Endothelial cell of umbilical vein (primary cell): ENCODE measurements at regions of chr15 and their contacts with region 1.

Region 1: GRCh38 chr15:59528965-59529402 is 82.6 kb upstream of the GCNT3 start:
- DNase-seq: peak; percentile 84
- H3K4me3 ChIP-seq: no peak overlapping the region
- H3K27ac ChIP-seq: no peak overlapping the region
- H3K4me1 ChIP-seq: no peaks in the 10 kb centered on the region
- H3K27me3 ChIP-seq: no peaks in the 10 kb centered on the region
- CTCF ChIP-seq: peak; percentile 78 to 84
- POLR2A ChIP-seq: no peak

Region 2: GRCh38 chr15:58212909-58213526 is 1316.0 kb before region 1 on chr15:
- CTCF ChIA-PET with region 1: interaction called, 27 read pairs
- POLR2A ChIA-PET with region 1: no interaction called
- dilution Hi-C with region 1: no loop called
- intact Hi-C with region 1: no loop called
- DNase-seq: peak; percentile 56
- H3K4me3 ChIP-seq: no peak overlapping the region
- H3K27ac ChIP-seq: no peak overlapping the region
- H3K4me1 ChIP-seq: peaks cover 5% of the 10 kb centered on the region
- H3K27me3 ChIP-seq: no peaks in the 10 kb centered on the region
- CTCF ChIP-seq: peak; percentile 35 to 59
- POLR2A ChIP-seq: no peak

Region 3: DNA sequence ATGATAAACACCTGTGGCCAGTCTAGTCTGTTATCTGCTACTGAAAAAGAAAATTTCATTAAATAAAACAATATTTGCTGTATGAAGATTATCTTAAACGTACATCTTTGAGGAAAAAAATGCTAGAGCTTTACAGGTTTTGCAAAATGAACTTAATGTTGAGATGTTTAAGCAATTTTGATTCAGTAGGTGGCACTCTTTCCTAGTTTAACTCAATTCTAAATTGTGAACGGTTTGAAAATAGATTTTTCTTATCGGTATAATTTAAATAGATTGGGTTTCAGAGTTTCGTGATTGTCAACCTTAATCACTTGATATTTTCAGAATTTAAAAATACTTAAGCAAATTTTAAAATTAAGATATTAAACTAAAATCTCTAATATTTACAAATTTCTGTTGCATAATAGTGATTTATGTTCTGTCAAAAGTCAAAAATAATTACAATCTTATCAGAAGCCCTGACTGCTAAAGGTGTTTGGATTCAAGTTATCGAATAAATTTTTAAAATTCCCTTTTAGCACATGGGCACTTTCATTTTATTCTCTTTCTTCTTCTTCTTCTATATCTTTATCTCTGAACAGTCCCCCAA is 548.5 kb before region 1 on chr15:
- CTCF ChIA-PET with region 1: interaction called, 15 read pairs
- POLR2A ChIA-PET with region 1: no interaction called
- dilution Hi-C with region 1: no loop called
- intact Hi-C with region 1: no loop called
- DNase-seq: peak; percentile 59
- H3K4me3 ChIP-seq: no peak overlapping the region
- H3K27ac ChIP-seq: no peak overlapping the region
- H3K4me1 ChIP-seq: peaks cover 10% of the 10 kb centered on the region
- H3K27me3 ChIP-seq: peaks cover 4 to 7% of the 10 kb centered on the region in 2 experiments
- CTCF ChIP-seq: peak; percentile 19 to 21
- POLR2A ChIP-seq: no peak

Region 4: DNA sequence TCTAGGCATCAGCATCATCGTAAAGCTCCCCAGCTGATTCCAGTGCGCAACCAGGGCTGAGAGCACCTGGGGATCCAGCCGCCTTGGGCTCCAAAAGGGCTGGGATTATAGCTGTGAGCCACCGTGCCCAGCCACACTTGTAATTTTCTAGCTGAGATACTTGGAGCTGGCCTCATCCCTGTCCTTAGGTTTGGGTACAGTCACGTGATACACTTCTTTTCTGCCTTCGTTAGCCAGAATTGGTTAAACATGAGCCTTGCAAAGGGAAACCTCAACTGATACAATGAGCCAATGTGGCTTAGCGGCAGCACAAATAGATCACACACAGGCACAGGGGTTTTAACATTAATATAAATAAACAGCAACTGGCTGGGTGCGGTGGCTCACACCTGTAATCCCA is 12.8 kb after region 1 on chr15:
- CTCF ChIA-PET with region 1: interaction called, 12 read pairs
- POLR2A ChIA-PET with region 1: no interaction called
- dilution Hi-C with region 1: no loop called
- intact Hi-C with region 1: no loop called
- DNase-seq: no peak
- H3K4me3 ChIP-seq: no peak overlapping the region
- H3K27ac ChIP-seq: no peak overlapping the region
- H3K4me1 ChIP-seq: no peaks in the 10 kb centered on the region
- H3K27me3 ChIP-seq: peaks cover 0 to 3% of the 10 kb centered on the region in 2 experiments
- CTCF ChIP-seq: no peak
- POLR2A ChIP-seq: no peak

Region 5: GRCh38 chr15:59622289-59622688 is 93.3 kb after region 1 on chr15:
- CTCF ChIA-PET with region 1: interaction called, 31 read pairs
- POLR2A ChIA-PET with region 1: no interaction called
- dilution Hi-C with region 1: no loop called
- intact Hi-C with region 1: loop called (anchors 1 kb)
- DNase-seq: peak; percentile 55
- H3K4me3 ChIP-seq: no peak overlapping the region
- H3K27ac ChIP-seq: no peak overlapping the region
- H3K4me1 ChIP-seq: no peaks in the 10 kb centered on the region
- H3K27me3 ChIP-seq: peaks cover 15 to 17% of the 10 kb centered on the region in 2 experiments
- CTCF ChIP-seq: peak; percentile 29 to 64
- POLR2A ChIP-seq: no peak

Region 6: GRCh38 chr15:59649611-59650010 is 120.6 kb after region 1 on chr15:
- CTCF ChIA-PET with region 1: interaction called, 60 read pairs
- POLR2A ChIA-PET with region 1: no interaction called
- dilution Hi-C with region 1: no loop called
- intact Hi-C with region 1: no loop called
- DNase-seq: no peak
- H3K4me3 ChIP-seq: no peak overlapping the region
- H3K27ac ChIP-seq: no peak overlapping the region
- H3K4me1 ChIP-seq: no peaks in the 10 kb centered on the region
- H3K27me3 ChIP-seq: no peaks in the 10 kb centered on the region
- CTCF ChIP-seq: no peak
- POLR2A ChIP-seq: no peak

Region 7: DNA sequence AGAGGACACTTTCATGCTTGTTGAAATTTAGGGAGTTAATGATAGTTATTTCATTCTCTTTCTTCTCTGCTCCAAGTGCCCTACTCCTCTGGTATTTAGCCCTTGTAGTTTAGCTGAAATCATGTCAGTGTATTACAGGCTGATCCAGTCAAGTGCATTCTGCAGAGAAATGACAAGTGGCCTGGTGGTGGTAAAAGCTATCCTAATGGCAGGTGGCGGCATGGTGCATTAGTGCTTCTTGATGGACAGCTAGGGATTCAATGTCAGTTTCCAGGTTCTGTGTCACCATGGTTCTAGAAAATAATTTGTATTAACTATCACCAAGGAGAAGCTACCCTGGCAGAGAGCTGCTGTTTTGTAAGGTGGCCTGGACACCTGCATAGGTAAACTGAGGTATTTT is 250.1 kb after region 1 on chr15:
- CTCF ChIA-PET with region 1: no interaction called
- POLR2A ChIA-PET with region 1: no interaction called
- dilution Hi-C with region 1: no loop called
- intact Hi-C with region 1: no loop called
- DNase-seq: no peak
- H3K4me3 ChIP-seq: no peak overlapping the region
- H3K27ac ChIP-seq: no peak overlapping the region
- H3K4me1 ChIP-seq: no peaks in the 10 kb centered on the region
- H3K27me3 ChIP-seq: peaks cover 0 to 3% of the 10 kb centered on the region in 2 experiments
- CTCF ChIP-seq: no peak
- POLR2A ChIP-seq: no peak